ENCODE measurements at regions of chr16 and their contacts with region 1.

Region 1: GRCh38 chr16:66740010-66740409 is 11.4 kb downstream of the DYNC1LI2 start:
- DNase-seq: peak; percentile 66

Region 2: GRCh38 chr16:66728117-66728787 is 11.8 kb before region 1 on chr16:
- CTCF ChIA-PET with region 1: interaction called, 16 read pairs
- POLR2A ChIA-PET with region 1: no interaction called
- DNase-seq: peak; percentile 70

Region 3: DNA sequence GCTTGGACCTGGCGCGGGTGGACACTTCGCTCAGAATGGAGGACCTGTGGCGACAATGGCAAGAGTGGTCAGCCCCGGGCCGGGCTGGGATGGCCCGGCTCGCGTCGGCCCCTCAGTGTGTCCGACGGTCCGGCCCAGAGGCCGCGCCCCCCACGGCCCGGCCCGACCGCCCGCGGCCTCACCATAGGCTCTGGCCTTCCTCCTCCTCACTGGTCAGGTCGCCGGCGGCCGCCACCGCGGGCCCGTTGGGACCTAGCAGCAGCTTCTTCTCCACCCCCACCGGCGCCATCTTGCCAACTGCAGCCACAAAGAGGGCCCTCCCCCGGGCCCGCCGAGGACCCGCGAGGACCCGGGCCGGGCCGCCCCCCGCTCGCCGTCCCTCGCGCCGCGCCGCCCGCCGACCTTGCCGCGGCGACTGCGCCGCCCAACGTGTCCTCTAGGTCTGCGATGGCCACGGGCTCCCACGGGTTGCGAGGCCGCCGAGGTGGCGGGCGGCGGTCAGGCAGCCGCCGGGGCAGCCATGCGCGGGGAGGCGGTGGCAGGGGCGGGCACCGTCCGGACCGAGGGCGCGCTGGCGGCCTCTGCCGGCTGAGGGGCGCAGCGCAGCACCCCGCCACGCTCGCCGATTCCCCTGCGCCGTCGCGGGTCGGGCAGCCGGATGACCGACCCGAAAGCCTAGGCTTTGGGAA is 11.4 kb after region 1 on chr16 and contains the start of gene DYNC1LI2:
- CTCF ChIA-PET with region 1: interaction called, 11 read pairs
- POLR2A ChIA-PET with region 1: interaction called, 14 read pairs
- DNase-seq: peak; percentile 95